ENCODE measurements at regions of chr5 and their contacts with region 1.

Region 1: DNA sequence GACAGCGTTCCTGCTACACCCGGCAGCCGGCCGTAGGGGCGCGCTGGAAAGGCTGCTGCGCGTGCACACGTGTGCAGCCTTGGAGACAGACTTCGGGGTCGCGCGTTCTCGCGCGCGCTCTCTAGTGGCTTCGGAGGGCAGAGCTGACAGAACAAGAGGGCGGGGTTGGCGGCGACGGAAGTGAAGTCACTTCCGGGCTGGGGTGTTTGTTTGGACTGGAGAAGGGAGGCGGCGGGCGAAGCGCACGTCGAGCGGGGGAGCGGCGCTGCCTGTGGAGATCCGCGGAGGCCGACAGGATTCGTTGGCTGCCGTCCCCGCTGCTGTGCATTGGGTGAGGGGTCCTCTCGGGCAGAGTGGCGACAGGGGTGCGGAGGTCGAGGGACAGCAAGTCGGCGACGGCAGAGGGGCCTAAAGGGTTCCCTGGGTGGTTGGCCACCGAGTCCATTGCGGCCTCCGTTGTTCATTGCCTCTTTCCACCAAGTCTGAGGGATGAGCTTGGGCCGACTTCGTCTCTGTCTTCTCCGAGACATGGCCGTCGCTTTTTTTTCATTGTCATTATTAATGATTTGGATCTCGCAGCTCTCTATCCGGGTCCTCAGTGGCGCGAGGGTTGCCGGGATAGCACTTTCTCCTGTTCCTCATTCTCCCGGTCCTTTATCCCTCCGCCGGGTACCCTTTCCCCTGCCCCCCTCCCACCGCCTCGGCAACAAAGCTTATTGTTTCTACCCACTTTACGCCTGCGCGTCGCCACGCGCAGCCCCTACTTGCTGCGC is at the start of gene PAIP2:
- DNase-seq: peak; percentile 94

Region 2: GRCh38 chr5:139273572-139274289 is 68.1 kb before region 1 on chr5:
- CTCF ChIA-PET with region 1: no interaction called
- POLR2A ChIA-PET with region 1: interaction called, 15 read pairs
- DNase-seq: peak; percentile 96

Region 3: GRCh38 chr5:139287890-139288635 is 53.8 kb before region 1 on chr5:
- CTCF ChIA-PET with region 1: no interaction called
- POLR2A ChIA-PET with region 1: interaction called, 57 read pairs
- DNase-seq: no peak

Region 4: DNA sequence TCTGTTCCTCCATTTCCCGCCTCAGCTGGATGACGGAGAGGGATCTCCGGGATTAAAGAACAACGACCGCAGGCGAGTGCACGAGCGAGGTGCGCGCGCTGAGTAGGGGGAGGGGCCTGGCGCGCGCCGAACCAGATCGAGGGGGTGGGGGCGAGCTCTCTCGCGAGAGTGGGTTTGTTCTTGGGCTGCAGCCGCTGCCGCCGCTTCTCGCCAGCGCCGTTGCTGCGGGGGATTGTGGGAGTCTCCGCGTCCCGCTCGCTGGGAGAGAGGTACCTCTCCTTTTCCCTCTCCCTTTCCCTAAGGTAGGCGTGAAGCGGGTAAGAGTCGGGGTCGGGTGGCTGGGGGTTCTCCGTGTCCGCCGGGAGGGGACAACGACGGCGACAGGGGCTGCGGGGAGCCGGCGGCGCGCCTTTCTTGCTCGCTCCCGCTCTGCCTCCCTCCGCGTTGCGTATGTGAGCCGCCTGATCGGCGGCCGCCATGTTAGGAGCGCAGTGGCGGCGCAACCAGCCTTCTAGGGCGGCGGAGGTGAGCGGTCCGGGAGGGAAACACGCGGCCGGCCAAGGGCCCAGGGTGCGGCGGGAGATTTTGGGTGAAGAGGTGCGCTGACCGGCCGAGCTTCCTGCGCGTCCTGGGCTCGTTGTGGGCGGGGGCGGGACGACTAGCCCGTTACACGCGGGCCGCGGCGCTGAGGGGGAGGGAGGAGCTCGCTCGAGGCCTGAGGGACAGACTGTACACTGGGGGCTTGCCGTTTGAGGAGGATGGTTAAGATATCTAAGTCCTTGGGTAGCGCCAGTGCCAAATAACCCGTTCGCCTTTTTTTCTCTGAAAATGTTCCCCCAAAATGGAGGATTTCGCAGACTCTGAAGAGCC is 48.1 kb before region 1 on chr5 and contains the start of gene MATR3:
- CTCF ChIA-PET with region 1: no interaction called
- POLR2A ChIA-PET with region 1: interaction called, 57 read pairs
- DNase-seq: peak; percentile 92

Region 5: GRCh38 chr5:139301808-139302499 is 39.9 kb before region 1 on chr5:
- CTCF ChIA-PET with region 1: interaction called, 4 read pairs
- POLR2A ChIA-PET with region 1: interaction called, 16 read pairs
- DNase-seq: no peak

Region 6: DNA sequence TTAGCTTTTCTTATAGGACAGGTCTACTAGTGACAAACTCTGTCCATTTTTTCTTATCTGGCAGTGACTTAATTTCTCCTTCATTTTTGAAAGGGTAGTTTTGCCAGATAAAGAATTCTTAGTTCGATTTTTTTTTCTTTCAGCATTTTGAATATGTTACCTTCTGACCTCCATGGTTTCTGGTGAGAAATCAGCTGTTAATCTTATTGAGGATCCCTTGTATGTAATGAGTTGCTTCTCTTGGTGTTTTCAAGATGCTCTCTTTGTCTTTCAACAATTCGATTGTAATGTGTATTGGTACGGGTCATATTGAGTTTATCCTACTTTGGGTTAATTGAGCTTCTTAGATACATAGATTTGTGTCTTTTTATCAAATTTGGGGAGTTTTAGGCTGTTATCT is 12.3 kb after region 1 on chr5:
- CTCF ChIA-PET with region 1: interaction called, 3 read pairs
- POLR2A ChIA-PET with region 1: interaction called, 11 read pairs
- DNase-seq: no peak

Region 7: DNA sequence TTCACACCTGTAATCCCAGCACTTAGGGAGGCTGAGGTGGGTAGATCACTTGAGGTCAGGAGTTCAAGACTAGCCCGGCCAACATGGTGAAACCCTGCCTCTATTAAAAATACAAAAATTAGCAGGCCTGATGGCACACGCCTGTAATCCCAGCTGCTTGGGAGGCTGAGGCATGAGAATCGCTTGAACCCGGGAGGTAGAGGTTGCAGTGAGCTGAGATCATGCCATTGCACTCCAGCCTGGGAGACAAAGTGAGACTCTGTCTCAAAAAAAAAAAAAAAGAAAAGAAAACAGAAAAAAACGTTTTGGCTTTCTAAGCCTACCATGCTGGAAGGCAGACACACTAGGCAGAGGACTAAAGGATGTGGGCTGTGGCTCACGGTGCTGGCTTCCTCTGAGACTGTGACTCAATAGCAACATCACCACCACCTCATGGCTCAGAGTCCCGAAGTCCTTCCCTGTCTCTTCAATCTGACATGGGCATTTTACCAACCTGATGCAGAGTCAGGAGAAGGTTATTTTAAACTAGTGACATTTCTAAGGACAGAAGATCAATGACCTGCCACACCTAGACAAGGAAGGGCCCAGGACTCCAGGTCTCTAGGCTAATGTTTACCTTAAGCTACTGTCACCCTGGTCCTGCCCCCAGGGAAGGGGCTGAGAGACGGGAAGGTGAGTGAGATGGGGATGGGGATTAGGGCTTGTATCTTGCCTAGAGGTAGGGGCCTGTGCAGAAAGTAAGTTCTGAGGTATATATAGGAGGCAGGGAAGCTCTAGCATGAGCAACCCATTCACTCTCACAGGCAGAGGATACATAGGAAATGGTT is 117.0 kb after region 1 on chr5:
- CTCF ChIA-PET with region 1: no interaction called
- POLR2A ChIA-PET with region 1: no interaction called
- DNase-seq: no peak

Region 8: DNA sequence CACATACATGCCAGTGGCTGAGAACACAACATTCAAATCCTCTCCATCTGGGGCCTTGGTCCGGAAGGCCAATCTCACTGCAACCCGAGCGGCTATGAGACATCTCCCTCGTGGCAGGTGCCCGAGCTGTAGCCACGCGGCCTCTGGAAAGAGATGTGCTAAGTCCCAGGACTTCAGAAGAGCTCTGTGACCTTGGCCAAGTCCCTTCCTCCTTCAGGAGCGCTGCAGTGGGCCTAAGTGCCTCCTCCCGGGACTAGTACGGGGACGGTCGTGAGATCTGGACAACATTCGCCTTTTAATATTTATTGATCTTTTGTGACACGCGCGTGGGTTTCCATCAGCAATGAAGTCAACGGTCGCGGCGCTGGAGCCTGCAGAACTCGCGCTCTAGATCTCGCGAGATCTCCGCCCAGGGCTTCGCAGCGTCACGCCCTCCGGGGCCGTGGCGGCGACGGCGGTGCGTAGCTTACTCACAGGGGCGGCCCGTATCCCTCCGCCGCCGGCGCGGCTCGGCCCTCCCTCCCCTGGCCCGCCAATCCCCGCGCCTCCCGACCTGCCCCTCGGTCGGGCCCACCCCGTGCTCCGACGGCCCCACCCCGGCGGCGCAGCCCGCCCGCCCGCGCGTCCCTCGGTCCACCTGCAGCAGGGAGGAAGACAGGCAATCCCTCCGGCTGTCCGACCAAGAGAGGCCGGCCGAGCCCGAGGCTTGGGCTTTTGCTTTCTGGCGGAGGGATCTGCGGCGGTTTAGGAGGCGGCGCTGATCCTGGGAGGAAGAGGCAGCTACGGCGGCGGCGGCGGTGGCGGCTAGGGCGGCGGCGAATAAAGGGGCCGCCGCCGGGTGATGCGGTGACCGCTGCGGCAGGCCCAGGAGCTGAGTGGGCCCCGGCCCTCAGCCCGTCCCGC is 219.2 kb after region 1 on chr5 and contains the start of gene UBE2D2:
- CTCF ChIA-PET with region 1: interaction called, 3 read pairs
- POLR2A ChIA-PET with region 1: interaction called, 18 read pairs
- DNase-seq: peak; percentile 95

Measured in HEK293T (cell line).